GM18951 (cell line): ENCODE measurements at regions of chr10 and their contacts with region 1.

Region 1: DNA sequence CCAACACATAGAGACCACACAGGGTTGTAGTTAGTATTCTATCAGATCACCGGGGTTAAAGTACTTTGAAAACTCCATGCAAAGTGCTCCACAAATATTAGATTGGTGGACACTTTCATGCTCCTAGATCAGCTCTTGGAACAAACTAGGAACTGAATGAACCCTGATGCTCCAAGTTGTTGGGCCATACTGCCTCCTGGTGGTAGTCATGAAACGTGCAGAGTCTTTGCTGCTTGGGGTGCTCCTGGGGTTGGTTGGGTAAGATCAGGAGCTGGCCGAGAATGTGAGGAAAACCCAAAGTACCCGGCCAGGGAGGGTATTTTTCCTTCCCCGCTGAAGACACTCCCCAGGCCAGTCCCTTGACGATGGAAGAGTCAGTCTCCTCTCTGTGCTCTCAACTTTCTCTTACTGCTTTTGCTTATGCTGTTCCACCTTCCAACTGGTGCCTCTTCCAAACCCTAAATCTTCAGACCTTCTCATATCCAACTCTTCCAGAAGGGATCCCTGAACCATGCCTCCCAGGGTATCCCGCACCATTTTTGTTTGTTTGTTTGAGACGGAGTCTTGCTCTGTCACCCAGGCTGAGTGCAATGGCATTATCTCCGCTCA is 920 bp upstream of the RPEL1 start:
- POLR2A ChIP-seq: no peak

Region 2: GRCh38 chr10:102583435-102584417 is 661.0 kb before region 1 on chr10:
- in situ Hi-C with region 1: no loop called
- POLR2A ChIP-seq: no peak

Region 3: DNA sequence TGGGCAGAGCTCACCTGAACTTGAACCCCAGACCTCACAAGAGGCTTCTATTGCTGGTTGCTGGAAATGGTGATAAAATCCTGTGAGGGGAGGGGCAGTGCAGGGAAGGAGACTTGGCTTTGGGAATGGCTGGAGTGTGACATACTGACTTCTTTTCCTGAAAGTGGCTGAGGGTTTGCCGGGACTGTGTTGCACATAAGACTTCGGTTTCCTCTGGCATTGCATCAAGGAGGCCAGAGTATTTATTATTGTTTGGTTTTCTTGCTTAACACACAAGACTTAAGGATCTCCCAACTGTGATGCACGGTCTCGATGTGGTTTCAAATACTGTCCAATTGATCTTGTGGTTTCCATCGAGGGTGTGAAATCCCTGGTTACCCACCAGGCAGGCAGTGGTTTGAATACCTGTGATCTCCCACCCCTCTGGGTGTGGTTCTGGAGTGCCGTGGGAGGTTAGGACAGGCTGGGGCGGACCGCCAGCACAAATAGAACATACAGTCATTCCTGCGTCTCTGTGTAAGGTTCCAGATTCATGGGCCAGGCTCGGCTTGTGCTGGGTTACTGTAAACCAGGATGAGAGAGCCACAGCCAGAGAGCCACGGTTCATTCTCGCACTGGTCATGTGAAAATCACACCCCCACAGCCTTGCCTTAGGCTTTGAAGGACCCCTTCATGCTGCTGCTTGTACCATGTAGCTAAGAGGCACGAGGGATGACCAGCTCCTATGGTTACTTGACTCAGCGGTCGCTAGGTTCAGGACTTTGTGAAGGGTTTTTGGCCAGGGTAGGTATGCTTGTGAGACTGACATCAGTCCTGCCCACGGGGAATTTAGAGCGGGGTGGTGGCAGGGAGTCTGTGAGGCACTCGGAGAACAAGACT is 461.9 kb before region 1 on chr10:
- in situ Hi-C with region 1: no loop called
- POLR2A ChIP-seq: no peak

Region 4: GRCh38 chr10:102917962-102918816 is 326.6 kb before region 1 on chr10 and contains the start of gene CNNM2:
- in situ Hi-C with region 1: loop called (anchors 10 kb)
- POLR2A ChIP-seq: peak; percentile 83

Region 5: DNA sequence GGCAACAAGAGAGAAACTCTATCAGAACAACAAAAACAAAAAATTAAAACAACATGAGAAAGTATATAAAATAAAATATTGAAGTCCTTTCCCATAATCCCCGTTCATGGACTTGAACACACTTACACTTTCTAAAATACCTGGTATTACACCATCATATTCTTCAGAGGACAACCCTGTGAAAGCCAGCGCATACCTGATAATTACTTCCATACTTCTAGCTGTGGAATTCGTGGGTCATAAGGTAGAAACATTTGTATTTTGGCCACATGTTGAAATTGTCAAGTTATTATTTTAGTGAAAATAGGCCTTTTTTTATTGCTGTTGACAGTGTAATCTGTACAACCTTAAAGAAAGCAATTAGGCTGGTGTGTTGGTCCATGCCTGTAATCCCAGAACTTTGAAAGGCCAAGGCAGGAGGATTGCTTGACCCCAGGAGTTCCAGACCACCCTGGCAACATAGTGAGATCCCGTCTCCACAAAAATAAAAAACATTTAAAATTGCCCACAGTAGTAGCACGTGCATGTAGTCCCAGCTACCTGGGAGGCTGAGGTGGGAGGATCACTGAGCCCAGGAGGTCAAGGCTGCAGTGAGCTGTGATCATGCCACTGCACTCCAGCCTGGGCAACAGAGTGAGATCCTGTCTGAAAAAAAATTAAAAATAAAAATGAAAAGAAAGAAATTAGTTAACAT is 111.3 kb after region 1 on chr10:
- in situ Hi-C with region 1: no loop called
- POLR2A ChIP-seq: no peak